PC-3 (cell line): ENCODE measurements at regions of chr6 and their contacts with region 1.

Region 1: GRCh38 chr6:22363714-22364239 is 66.9 kb upstream of the PRL start:
- DNase-seq: no peak
- ATAC-seq: no peak; the same call in 1 of the 2 replicates
- H3K4me3 ChIP-seq: 0 out of 2 replicates have a peak overlapping the region, but pooled peaks have one; percentile 10
- H3K27ac ChIP-seq: peak overlapping the region; percentile 94
- H3K4me1 ChIP-seq: peaks cover 44% of the 10 kb centered on the region
- H3K27me3 ChIP-seq: no peaks in the 10 kb centered on the region
- CTCF ChIP-seq: no peak

Region 2: GRCh38 chr6:21946298-21946783 is 417.4 kb before region 1 on chr6:
- CTCF ChIA-PET with region 1: interaction called, 3 read pairs
- POLR2A ChIA-PET with region 1: no interaction called
- intact Hi-C with region 1: loop called (anchors 10 kb)
- DNase-seq: peak; percentile 46
- ATAC-seq: no peak
- H3K4me3 ChIP-seq: no peak overlapping the region
- H3K27ac ChIP-seq: no peak overlapping the region
- H3K4me1 ChIP-seq: peaks cover 32% of the 10 kb centered on the region
- H3K27me3 ChIP-seq: no peaks in the 10 kb centered on the region
- CTCF ChIP-seq: no peak

Region 3: GRCh38 chr6:22236626-22237414 is 127.0 kb before region 1 on chr6:
- CTCF ChIA-PET with region 1: no interaction called
- POLR2A ChIA-PET with region 1: no interaction called
- intact Hi-C with region 1: loop called (anchors 5 kb)
- DNase-seq: peak; percentile 97
- ATAC-seq: peak; percentile 90
- H3K4me3 ChIP-seq: peak overlapping the region; percentile 34; the same call in 1 of the 2 replicates
- H3K27ac ChIP-seq: peak overlapping the region; percentile 91
- H3K4me1 ChIP-seq: peaks cover 31% of the 10 kb centered on the region
- H3K27me3 ChIP-seq: no peaks in the 10 kb centered on the region
- CTCF ChIP-seq: no peak

Region 4: GRCh38 chr6:22343859-22344258 is 19.9 kb before region 1 on chr6:
- CTCF ChIA-PET with region 1: no interaction called
- POLR2A ChIA-PET with region 1: no interaction called
- intact Hi-C with region 1: no loop called
- DNase-seq: peak; percentile 35
- ATAC-seq: no peak
- H3K4me3 ChIP-seq: no peak overlapping the region
- H3K27ac ChIP-seq: no peak overlapping the region
- H3K4me1 ChIP-seq: no peaks in the 10 kb centered on the region
- H3K27me3 ChIP-seq: no peaks in the 10 kb centered on the region
- CTCF ChIP-seq: peak; percentile 76

Region 5: GRCh38 chr6:22471132-22471690 is 107.4 kb after region 1 on chr6:
- CTCF ChIA-PET with region 1: no interaction called
- POLR2A ChIA-PET with region 1: no interaction called
- intact Hi-C with region 1: loop called (anchors 1 kb)
- DNase-seq: peak; percentile 89
- ATAC-seq: peak; percentile 95
- H3K4me3 ChIP-seq: 0 out of 2 replicates have a peak overlapping the region, but pooled peaks have one; percentile 7
- H3K27ac ChIP-seq: peak overlapping the region; percentile 40
- H3K4me1 ChIP-seq: peaks cover 27% of the 10 kb centered on the region
- H3K27me3 ChIP-seq: no peaks in the 10 kb centered on the region
- CTCF ChIP-seq: peak; percentile 55

Region 6: DNA sequence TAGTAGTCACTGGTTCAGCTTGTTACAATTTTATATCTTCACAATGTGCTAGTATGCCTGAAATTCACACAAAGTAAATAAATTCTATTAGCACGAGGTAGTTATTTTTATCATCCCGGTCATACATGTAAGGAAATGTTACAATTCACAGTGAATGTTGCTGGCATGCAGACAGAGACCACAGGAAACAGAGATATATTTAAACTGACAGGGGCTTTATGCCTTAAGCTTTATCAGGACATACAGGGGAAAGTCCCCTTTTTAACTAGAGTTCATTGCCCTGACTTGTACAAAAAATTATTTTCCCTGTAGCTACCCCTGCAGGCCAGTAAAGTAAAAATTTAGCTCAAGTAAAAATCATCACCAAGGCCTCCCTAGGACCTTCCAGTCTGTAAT is 1050.3 kb after region 1 on chr6:
- CTCF ChIA-PET with region 1: no interaction called
- POLR2A ChIA-PET with region 1: no interaction called
- intact Hi-C with region 1: loop called (anchors 10 kb)
- DNase-seq: peak; percentile 70
- ATAC-seq: peak; percentile 92
- H3K4me3 ChIP-seq: no peak overlapping the region
- H3K27ac ChIP-seq: peak overlapping the region; percentile 54
- H3K4me1 ChIP-seq: peaks cover 18% of the 10 kb centered on the region
- H3K27me3 ChIP-seq: no peaks in the 10 kb centered on the region
- CTCF ChIP-seq: peak; percentile 66